H1 (cell line): ENCODE measurements at regions of chr12 and their contacts with region 1.

Region 1: GRCh38 chr12:120495723-120496412 is at the start of gene DYNLL1:
- DNase-seq: peak; percentile 93 to 100
- H3K4me3 ChIP-seq: peak within 1 kb of the TSS; percentile 95 to 96 (median 95)
- H3K27ac ChIP-seq: peak within 1 kb of the TSS; percentile 43; the same call in 1 of the 2 replicates
- H3K4me1 ChIP-seq: peaks cover 0 to 6% (median 1%) of the 10 kb centered on the region in 4 experiments; a peak in 3 of 7 replicates
- H3K27me3 ChIP-seq: no peaks in the 10 kb centered on the region
- CTCF ChIP-seq: no peak
- EP300 ChIP-seq: 0 out of 3 replicates have a peak, but pooled peaks of 1 of the 2 experiments have one; percentile 39
- POLR2A ChIP-seq: peak; percentile 97 to 98
- RAD21 ChIP-seq: no peak
- total RNA-seq, gene DYNLL1: 419 and 423 TPM in 2 replicates

Region 2: GRCh38 chr12:120463712-120464111 is 32.2 kb before region 1 on chr12:
- CTCF ChIA-PET with region 1: interaction called, 47 read pairs
- POLR2A ChIA-PET with region 1: interaction called, 119 read pairs
- DNase-seq: no peak
- H3K4me3 ChIP-seq: no peak overlapping the region
- H3K27ac ChIP-seq: no peak overlapping the region
- H3K4me1 ChIP-seq: no peaks in the 10 kb centered on the region
- H3K27me3 ChIP-seq: no peaks in the 10 kb centered on the region
- CTCF ChIP-seq: no peak
- EP300 ChIP-seq: no peak
- POLR2A ChIP-seq: peak in 1 of 2 experiments; percentile 49; a peak in 1 of 3 replicates
- RAD21 ChIP-seq: no peak

Region 3: GRCh38 chr12:120481022-120481767 is 14.7 kb before region 1 on chr12:
- CTCF ChIA-PET with region 1: interaction called, 11 read pairs
- POLR2A ChIA-PET with region 1: interaction called, 119 read pairs
- DNase-seq: no peak
- H3K4me3 ChIP-seq: no peak overlapping the region
- H3K27ac ChIP-seq: no peak overlapping the region
- H3K4me1 ChIP-seq: peaks cover 0 to 5% (median 0%) of the 10 kb centered on the region in 4 experiments; a peak in 1 of 7 replicates
- H3K27me3 ChIP-seq: no peaks in the 10 kb centered on the region
- CTCF ChIP-seq: no peak
- EP300 ChIP-seq: no peak
- POLR2A ChIP-seq: no peak
- RAD21 ChIP-seq: no peak

Region 4: GRCh38 chr12:120514002-120514401 is 18.1 kb after region 1 on chr12:
- CTCF ChIA-PET with region 1: interaction called, 3 read pairs
- POLR2A ChIA-PET with region 1: interaction called, 27 read pairs
- DNase-seq: no peak
- H3K4me3 ChIP-seq: no peak overlapping the region
- H3K27ac ChIP-seq: no peak overlapping the region
- H3K4me1 ChIP-seq: no peaks in the 10 kb centered on the region
- H3K27me3 ChIP-seq: no peaks in the 10 kb centered on the region
- CTCF ChIP-seq: no peak
- EP300 ChIP-seq: no peak
- POLR2A ChIP-seq: no peak
- RAD21 ChIP-seq: no peak

Region 5: GRCh38 chr12:120528861-120529525 is 33.1 kb after region 1 on chr12 and contains the start of gene COQ5:
- CTCF ChIA-PET with region 1: no interaction called
- POLR2A ChIA-PET with region 1: interaction called, 78 read pairs
- DNase-seq: peak; percentile 41 to 92
- H3K4me3 ChIP-seq: peak within 1 kb of the TSS; percentile 85 to 99 (median 90)
- H3K27ac ChIP-seq: peak within 1 kb of the TSS; percentile 96
- H3K4me1 ChIP-seq: peaks cover 0 to 6% (median 2%) of the 10 kb centered on the region in 4 experiments; a peak in 3 of 7 replicates
- H3K27me3 ChIP-seq: no peaks in the 10 kb centered on the region
- CTCF ChIP-seq: no peak
- EP300 ChIP-seq: 0 out of 3 replicates have a peak, but pooled peaks of 1 of the 2 experiments have one; percentile 62
- POLR2A ChIP-seq: peak; percentile 72 to 92
- RAD21 ChIP-seq: no peak
- total RNA-seq, gene COQ5: 35.1 and 38.3 TPM in 2 replicates

Region 6: GRCh38 chr12:120580787-120581723 is 85.2 kb after region 1 on chr12 and contains the start of gene POP5:
- CTCF ChIA-PET with region 1: interaction called, 6 read pairs
- POLR2A ChIA-PET with region 1: interaction called, 20 read pairs
- DNase-seq: peak; percentile 94 to 97
- H3K4me3 ChIP-seq: peak within 1 kb of the TSS; percentile 86 to 97 (median 87)
- H3K27ac ChIP-seq: peak within 1 kb of the TSS; percentile 70; the same call in 1 of the 2 replicates
- H3K4me1 ChIP-seq: peaks cover 0 to 3% (median 1%) of the 10 kb centered on the region in 4 experiments; a peak in 4 of 7 replicates
- H3K27me3 ChIP-seq: peaks cover 0 to 2% (median 0%) of the 10 kb centered on the region in 4 experiments; a peak in 1 of 7 replicates
- CTCF ChIP-seq: no peak
- EP300 ChIP-seq: no peak
- POLR2A ChIP-seq: peak; percentile 59 to 83
- RAD21 ChIP-seq: 0 out of 4 replicates have a peak, but pooled peaks of 1 of the 2 experiments have one; percentile 4
- total RNA-seq, gene POP5: 54.7 and 59.7 TPM in 2 replicates